Activated CD4-positive, alpha-beta T cell treated with anti-CD3 and anti-CD28 coated beads, Interleukin-2, amount 10 ng/mL, durations not matched to agents 24 days and 14 days (primary cell): ENCODE measurements at regions of chr1 and their contacts with region 1.

Region 1: DNA sequence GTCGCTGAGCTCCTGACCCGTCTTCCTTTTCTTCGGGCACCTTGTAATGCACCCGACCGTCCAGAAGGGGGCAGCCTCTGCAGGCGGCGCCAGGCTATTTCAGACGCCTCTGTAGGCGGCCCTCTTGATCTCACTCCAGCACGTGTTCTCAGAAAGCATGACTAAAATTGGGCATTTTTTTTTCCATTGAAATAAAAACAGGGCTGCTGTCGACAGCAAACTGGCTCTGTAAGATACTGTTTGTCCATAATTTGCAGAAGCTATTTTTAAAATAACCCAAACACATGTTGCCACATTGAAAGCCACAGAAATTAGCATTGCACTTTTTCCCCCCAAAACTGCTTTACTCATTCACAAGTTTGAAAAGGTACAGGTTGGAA is 78.0 kb downstream of the STUM start:
- DNase-seq: peak; percentile 94
- H3K4me3 Mint-ChIP-seq: peak overlapping the region; percentile 35
- H3K27ac Mint-ChIP-seq: peak overlapping the region; percentile 88
- H3K4me1 Mint-ChIP-seq: peaks cover 21% of the 10 kb centered on the region
- H3K27me3 Mint-ChIP-seq: peaks cover 8% of the 10 kb centered on the region

Region 2: GRCh38 chr1:226279498-226279897 is 347.1 kb before region 1 on chr1:
- intact Hi-C with region 1: no loop called
- DNase-seq: no peak
- H3K4me3 Mint-ChIP-seq: no peak overlapping the region
- H3K27ac Mint-ChIP-seq: no peak overlapping the region
- H3K4me1 Mint-ChIP-seq: peaks cover 2% of the 10 kb centered on the region
- H3K27me3 Mint-ChIP-seq: no peaks in the 10 kb centered on the region

Region 3: GRCh38 chr1:226642876-226643576 is 16.5 kb after region 1 on chr1:
- intact Hi-C with region 1: loop called (anchors 2 kb)
- DNase-seq: peak; percentile 80
- H3K4me3 Mint-ChIP-seq: peak overlapping the region; percentile 79
- H3K27ac Mint-ChIP-seq: peak overlapping the region; percentile 91
- H3K4me1 Mint-ChIP-seq: peaks cover 40% of the 10 kb centered on the region
- H3K27me3 Mint-ChIP-seq: no peaks in the 10 kb centered on the region

Region 4: GRCh38 chr1:226662642-226663326 is 36.2 kb after region 1 on chr1:
- intact Hi-C with region 1: loop called (anchors 2 kb)
- DNase-seq: peak; percentile 92
- H3K4me3 Mint-ChIP-seq: peak overlapping the region; percentile 69
- H3K27ac Mint-ChIP-seq: peak overlapping the region; percentile 81
- H3K4me1 Mint-ChIP-seq: peaks cover 79% of the 10 kb centered on the region
- H3K27me3 Mint-ChIP-seq: no peaks in the 10 kb centered on the region

Region 5: GRCh38 chr1:226687426-226687825 is 60.9 kb after region 1 on chr1:
- intact Hi-C with region 1: loop called (anchors 2 kb)
- DNase-seq: no peak
- H3K4me3 Mint-ChIP-seq: peak overlapping the region; percentile 23
- H3K27ac Mint-ChIP-seq: peak overlapping the region; percentile 83
- H3K4me1 Mint-ChIP-seq: peaks cover 89% of the 10 kb centered on the region
- H3K27me3 Mint-ChIP-seq: no peaks in the 10 kb centered on the region

Region 6: DNA sequence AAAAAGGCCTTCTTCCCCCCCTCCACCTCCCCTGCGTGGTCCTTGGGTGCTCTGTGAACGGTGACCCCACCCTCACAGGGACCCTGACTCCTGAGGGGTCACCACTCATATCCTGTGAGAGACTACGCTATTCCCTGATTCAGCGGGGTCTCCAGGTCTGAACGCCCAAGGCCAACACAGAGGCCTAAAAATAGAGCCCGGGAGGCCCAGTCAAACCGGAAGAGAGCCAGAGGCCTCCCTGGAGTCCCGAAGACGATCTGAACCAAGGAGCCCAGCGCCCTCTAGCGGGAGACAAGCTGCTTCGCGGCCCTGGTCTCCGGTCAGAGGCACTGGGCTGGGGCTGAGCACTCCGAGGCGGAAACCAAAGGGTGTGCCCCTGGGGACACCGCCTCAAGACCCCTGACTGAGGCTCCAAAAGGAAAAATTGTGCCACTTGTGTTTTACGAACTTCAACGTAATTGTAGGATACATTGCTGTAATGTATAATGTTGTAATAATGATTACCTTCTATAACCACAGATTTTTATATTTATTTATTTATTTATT is 201.5 kb after region 1 on chr1:
- intact Hi-C with region 1: loop called (anchors 1 kb)
- DNase-seq: peak; percentile 98
- H3K4me3 Mint-ChIP-seq: peak overlapping the region; percentile 63
- H3K27ac Mint-ChIP-seq: peak overlapping the region; percentile 92
- H3K4me1 Mint-ChIP-seq: peaks cover 20% of the 10 kb centered on the region
- H3K27me3 Mint-ChIP-seq: no peaks in the 10 kb centered on the region

Region 7: GRCh38 chr1:226882631-226883409 is 256.3 kb after region 1 on chr1:
- intact Hi-C with region 1: loop called (anchors 5 kb)
- DNase-seq: peak; percentile 84
- H3K4me3 Mint-ChIP-seq: peak overlapping the region; percentile 72
- H3K27ac Mint-ChIP-seq: peak overlapping the region; percentile 95
- H3K4me1 Mint-ChIP-seq: peaks cover 53% of the 10 kb centered on the region
- H3K27me3 Mint-ChIP-seq: no peaks in the 10 kb centered on the region

Region 8: DNA sequence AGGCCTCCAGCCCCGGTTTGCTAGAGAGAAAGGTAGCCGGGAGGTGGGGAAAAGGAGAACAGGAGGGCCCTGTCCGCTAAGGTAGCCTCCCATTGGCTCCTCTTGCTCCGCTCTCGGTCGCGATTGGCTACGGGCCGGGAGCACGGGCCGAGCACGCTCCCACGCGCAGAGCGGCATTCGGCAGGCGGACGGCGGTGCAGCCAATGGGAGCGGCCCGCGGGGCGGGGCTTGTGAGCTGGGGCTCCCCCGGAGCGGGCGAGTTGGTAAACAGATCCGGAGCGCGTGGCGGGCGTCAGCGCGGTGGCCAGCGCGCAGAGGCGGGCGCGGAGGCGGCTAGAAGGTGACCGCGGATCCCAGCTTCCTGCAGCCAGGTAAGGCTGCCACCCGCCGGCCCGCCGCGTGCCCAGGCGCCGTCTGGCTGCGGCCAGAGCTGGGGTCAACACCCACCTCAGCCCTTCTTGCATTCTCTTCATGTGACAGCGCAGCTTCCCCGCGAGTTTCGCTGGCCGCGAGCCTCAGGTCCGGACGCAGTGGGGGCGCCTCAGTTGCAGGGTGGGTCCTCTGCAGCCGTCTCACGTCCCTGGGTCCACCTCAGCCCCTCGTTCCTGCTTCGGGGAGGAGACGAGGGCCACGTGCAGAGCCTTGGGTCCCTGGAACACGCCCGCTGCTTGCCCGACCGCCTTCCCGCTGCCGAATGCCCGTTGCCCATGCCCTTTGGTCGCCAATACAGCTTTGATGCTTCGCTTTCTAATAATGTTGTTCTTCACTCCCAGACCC is 313.6 kb after region 1 on chr1 and contains the start of gene COQ8A:
- intact Hi-C with region 1: loop called (anchors 1 kb)
- DNase-seq: peak; percentile 100
- H3K4me3 Mint-ChIP-seq: peak within 1 kb of the TSS; percentile 93
- H3K27ac Mint-ChIP-seq: peak within 1 kb of the TSS; percentile 99
- H3K4me1 Mint-ChIP-seq: peaks cover 42% of the 10 kb centered on the region
- H3K27me3 Mint-ChIP-seq: no peaks in the 10 kb centered on the region
- total RNA-seq, gene COQ8A: 27.0 and 35.3 TPM in 2 replicates

Region 9: DNA sequence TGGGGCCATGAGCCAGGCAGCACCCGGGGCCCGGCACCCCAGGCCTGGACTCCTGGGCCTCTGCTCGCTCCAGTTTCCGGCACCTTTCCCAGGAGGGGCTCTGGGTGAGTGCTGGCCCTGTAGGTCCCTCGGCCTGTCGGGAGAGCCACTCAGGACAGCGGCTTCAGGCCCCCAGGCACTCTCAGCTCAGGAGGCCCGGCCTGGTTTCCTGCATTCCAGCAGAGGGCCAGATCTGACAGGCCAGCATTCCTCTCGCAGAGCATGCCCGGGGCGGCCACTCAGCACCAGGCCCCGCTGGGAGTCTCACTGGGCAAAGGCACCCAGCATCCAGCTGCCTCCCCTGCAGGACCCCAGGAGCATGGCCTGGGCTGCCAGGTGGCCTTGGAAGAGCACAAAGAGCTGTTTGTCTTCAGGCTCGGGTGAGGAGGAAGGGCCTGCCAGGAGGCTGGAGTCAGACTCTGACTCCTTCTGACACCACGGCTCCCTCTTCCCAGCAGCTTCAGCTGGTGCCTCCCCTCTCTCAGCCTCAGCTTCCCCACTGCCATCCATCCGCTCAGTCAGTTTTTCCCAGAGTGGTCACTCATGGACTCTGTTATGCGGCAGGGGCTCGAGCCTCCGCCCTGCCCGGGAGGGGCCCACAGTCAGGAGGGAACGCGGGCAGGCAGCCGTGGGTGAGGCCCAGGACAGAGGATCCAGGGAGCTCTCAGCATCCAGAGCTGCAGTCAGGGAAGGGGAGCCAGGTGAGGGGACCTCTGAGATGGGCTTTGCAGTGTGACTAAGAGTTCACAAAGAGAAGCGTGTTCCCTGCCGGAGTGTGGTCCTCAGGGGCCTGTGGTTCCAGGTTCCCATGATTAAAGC is 1269.5 kb after region 1 on chr1:
- intact Hi-C with region 1: no loop called
- DNase-seq: no peak
- H3K4me3 Mint-ChIP-seq: no peak overlapping the region
- H3K27ac Mint-ChIP-seq: no peak overlapping the region
- H3K4me1 Mint-ChIP-seq: no peaks in the 10 kb centered on the region
- H3K27me3 Mint-ChIP-seq: no peaks in the 10 kb centered on the region